A673 (cell line): ENCODE measurements at regions of chr10 and their contacts with region 1.

Region 1: GRCh38 chr10:86936661-86937501 is 20.5 kb downstream of the MMRN2 start:
- DNase-seq: no peak
- H3K4me3 ChIP-seq: no peak overlapping the region
- H3K27ac ChIP-seq: no peak overlapping the region
- H3K4me1 ChIP-seq: no peaks in the 10 kb centered on the region
- H3K27me3 ChIP-seq: no peaks in the 10 kb centered on the region
- CTCF ChIP-seq: no peak

Region 2: DNA sequence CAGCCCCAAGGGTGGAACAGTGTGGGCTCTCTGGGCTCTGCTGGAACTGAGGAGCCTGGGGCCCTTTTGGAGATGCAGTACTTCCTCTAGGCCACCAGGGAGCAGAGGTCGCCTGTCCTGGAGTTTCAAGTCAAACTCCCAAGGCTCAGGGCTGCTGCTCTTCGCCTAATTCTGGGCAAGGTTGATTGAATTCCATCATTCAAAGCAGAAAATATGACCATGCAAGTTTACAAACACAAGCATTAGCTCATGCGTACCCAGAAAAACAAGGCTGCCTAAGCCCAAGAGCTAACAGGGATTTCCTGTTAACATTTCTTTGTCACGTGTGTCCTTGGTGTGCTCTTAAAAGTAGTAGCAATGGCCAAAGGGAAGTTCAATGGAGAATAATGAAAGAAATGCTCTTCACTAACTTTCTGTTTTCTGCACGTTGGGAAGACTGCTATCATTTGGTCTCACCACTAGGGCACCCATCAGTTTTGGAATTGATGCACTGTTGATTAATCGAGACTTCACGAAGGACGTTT is 248.4 kb before region 1 on chr10:
- CTCF ChIA-PET with region 1: no interaction called
- POLR2A ChIA-PET with region 1: no interaction called
- intact Hi-C with region 1: loop called (anchors 1 kb)
- DNase-seq: peak; percentile 86
- H3K4me3 ChIP-seq: no peak overlapping the region
- H3K27ac ChIP-seq: no peak overlapping the region
- H3K4me1 ChIP-seq: peaks cover 7% of the 10 kb centered on the region
- H3K27me3 ChIP-seq: no peaks in the 10 kb centered on the region
- CTCF ChIP-seq: peak; percentile 77

Region 3: GRCh38 chr10:86815035-86815617 is 121.8 kb before region 1 on chr10:
- CTCF ChIA-PET with region 1: no interaction called
- POLR2A ChIA-PET with region 1: interaction called, 20 read pairs
- intact Hi-C with region 1: no loop called
- DNase-seq: no peak
- H3K4me3 ChIP-seq: no peak overlapping the region
- H3K27ac ChIP-seq: peak overlapping the region; percentile 22
- H3K4me1 ChIP-seq: peaks cover 35% of the 10 kb centered on the region
- H3K27me3 ChIP-seq: no peaks in the 10 kb centered on the region
- CTCF ChIP-seq: no peak

Region 4: DNA sequence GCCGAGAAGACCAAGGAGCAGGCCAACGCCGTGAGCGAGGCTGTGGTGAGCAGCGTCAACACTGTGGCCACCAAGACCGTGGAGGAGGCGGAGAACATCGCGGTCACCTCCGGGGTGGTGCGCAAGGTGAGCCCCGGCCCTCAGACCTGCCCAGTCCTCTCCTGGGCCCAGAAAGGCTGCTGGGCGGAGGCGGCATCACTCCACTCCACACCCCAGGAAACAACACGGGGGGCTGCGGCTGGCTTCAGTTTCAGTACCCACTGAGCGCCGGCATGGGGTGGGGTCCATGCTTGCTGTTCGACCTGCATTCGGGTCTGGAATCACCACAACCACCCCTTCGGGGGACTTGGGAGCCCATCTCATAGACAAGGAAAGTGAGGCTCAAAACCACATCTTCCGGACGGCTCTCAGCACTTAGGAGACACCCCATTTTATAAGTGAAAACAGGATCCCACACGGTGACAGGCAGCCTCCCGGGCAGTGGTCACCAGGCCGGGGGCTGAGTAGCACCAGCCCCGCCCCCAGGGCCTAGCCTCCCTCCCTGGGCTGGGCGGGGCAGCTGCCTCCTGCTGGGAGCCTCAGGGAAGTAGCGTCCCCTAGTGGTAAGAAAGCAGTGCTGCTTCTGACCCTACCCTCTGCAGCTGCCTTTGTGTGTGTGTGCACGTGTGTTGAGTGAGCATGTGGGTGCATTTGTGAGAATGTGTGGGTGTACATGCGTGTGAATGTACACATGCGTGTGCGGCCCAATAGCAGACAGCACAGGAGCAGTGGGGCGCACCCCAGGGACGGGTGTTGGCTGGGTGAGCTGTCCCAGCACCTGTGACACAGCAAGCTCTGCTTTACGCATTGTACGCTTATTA is 23.4 kb after region 1 on chr10:
- CTCF ChIA-PET with region 1: interaction called, 15 read pairs
- POLR2A ChIA-PET with region 1: no interaction called
- intact Hi-C with region 1: no loop called
- DNase-seq: peak; percentile 60
- H3K4me3 ChIP-seq: no peak overlapping the region
- H3K27ac ChIP-seq: no peak overlapping the region
- H3K4me1 ChIP-seq: peaks cover 6% of the 10 kb centered on the region
- H3K27me3 ChIP-seq: no peaks in the 10 kb centered on the region
- CTCF ChIP-seq: peak; percentile 88

Region 5: GRCh38 chr10:87782721-87783120 is 845.8 kb after region 1 on chr10:
- CTCF ChIA-PET with region 1: interaction called, 11 read pairs
- POLR2A ChIA-PET with region 1: no interaction called
- intact Hi-C with region 1: no loop called
- DNase-seq: no peak
- H3K4me3 ChIP-seq: no peak overlapping the region
- H3K27ac ChIP-seq: no peak overlapping the region
- H3K4me1 ChIP-seq: no peaks in the 10 kb centered on the region
- H3K27me3 ChIP-seq: no peaks in the 10 kb centered on the region
- CTCF ChIP-seq: no peak